IMR-90 (cell line): ENCODE measurements at regions of chr4 and their contacts with region 1.

Region 1: GRCh38 chr4:98658287-98659105 is at the start of gene TSPAN5:
- DNase-seq: peak; percentile 67
- ATAC-seq: peak; percentile 86
- H3K4me3 ChIP-seq: peak within 1 kb of the TSS; percentile 64
- H3K27ac ChIP-seq: peak within 1 kb of the TSS; percentile 94
- H3K4me1 ChIP-seq: peaks cover 23% of the 10 kb centered on the region
- H3K27me3 ChIP-seq: no peaks in the 10 kb centered on the region
- CTCF ChIP-seq: no peak; the same call in 1 of the 2 replicates
- POLR2A ChIP-seq: no peak; the same call in 1 of the 2 replicates
- RAD21 ChIP-seq: peak; percentile 13; the same call in 1 of the 2 replicates
- total RNA-seq, gene TSPAN5: 79.6 and 88.3 TPM in 2 replicates

Region 2: DNA sequence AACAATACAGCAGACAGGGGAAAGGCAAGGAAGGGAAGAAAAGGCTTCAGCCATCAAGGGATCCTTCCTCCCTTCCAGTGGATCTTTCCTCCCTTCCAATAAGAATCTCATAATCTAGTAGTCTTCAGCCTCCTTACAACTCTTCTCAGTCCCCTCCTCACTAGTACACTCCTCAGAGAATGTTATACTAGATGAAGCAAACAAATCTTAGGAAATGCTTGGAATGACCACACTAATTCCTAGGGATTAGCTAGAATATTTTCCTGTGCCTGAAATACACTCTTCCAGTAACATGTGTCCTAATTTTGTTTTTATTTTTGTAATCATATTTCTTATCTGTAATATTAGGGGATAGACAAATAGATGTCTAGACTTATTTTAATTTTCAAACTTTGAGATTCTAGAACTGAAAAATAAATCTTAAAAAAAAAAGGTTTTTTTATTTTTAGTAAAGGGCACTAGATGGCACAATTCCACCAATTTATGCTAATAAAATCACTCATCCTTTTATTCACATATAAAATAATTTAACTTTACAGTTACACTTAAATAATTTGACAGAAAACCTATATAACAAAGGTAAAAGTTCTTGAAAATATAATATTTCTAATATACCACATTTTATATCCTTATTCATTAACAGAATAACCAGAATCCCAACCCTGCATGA is 508.3 kb before region 1 on chr4:
- CTCF ChIA-PET with region 1: no interaction called
- POLR2A ChIA-PET with region 1: no interaction called
- dilution Hi-C with region 1: no loop called
- in situ Hi-C with region 1: loop called (anchors 25 kb)
- intact Hi-C with region 1: loop called (anchors 5 kb)
- DNase-seq: peak; percentile 16
- ATAC-seq: peak; percentile 59
- H3K4me3 ChIP-seq: no peak overlapping the region
- H3K27ac ChIP-seq: peak overlapping the region; percentile 29; the same call in 1 of the 2 replicates
- H3K4me1 ChIP-seq: peaks cover 2% of the 10 kb centered on the region; the same call in 1 of the 2 replicates
- H3K27me3 ChIP-seq: no peaks in the 10 kb centered on the region
- CTCF ChIP-seq: peak; percentile 45
- POLR2A ChIP-seq: no peak
- RAD21 ChIP-seq: peak; percentile 50

Region 3: GRCh38 chr4:98467627-98468072 is 190.8 kb before region 1 on chr4:
- CTCF ChIA-PET with region 1: interaction called, 8 read pairs
- POLR2A ChIA-PET with region 1: no interaction called
- dilution Hi-C with region 1: no loop called
- in situ Hi-C with region 1: loop called (anchors 5 kb)
- intact Hi-C with region 1: loop called (anchors 1 kb)
- DNase-seq: peak; percentile 95
- ATAC-seq: peak; percentile 88
- H3K4me3 ChIP-seq: peak overlapping the region; percentile 37; the same call in 1 of the 2 replicates
- H3K27ac ChIP-seq: 0 out of 2 replicates have a peak overlapping the region, but pooled peaks have one; percentile 4
- H3K4me1 ChIP-seq: peaks cover 5% of the 10 kb centered on the region
- H3K27me3 ChIP-seq: no peaks in the 10 kb centered on the region
- CTCF ChIP-seq: peak; percentile 82
- POLR2A ChIP-seq: peak; percentile 60; the same call in 1 of the 2 replicates
- RAD21 ChIP-seq: peak; percentile 90

Region 4: GRCh38 chr4:98546910-98547594 is 111.4 kb before region 1 on chr4:
- CTCF ChIA-PET with region 1: no interaction called
- POLR2A ChIA-PET with region 1: no interaction called
- dilution Hi-C with region 1: no loop called
- in situ Hi-C with region 1: no loop called
- intact Hi-C with region 1: loop called (anchors 5 kb)
- DNase-seq: peak; percentile 54
- ATAC-seq: peak; percentile 81
- H3K4me3 ChIP-seq: peak overlapping the region; percentile 26
- H3K27ac ChIP-seq: peak overlapping the region; percentile 56
- H3K4me1 ChIP-seq: no peaks in the 10 kb centered on the region; the same call in 1 of the 2 replicates
- H3K27me3 ChIP-seq: no peaks in the 10 kb centered on the region
- CTCF ChIP-seq: no peak
- POLR2A ChIP-seq: no peak
- RAD21 ChIP-seq: 0 out of 2 replicates have a peak, but pooled peaks have one; percentile 12

Region 5: GRCh38 chr4:98749206-98749605 is 90.7 kb after region 1 on chr4:
- CTCF ChIA-PET with region 1: no interaction called
- POLR2A ChIA-PET with region 1: no interaction called
- dilution Hi-C with region 1: no loop called
- in situ Hi-C with region 1: no loop called
- intact Hi-C with region 1: no loop called
- DNase-seq: no peak
- ATAC-seq: no peak
- H3K4me3 ChIP-seq: no peak overlapping the region
- H3K27ac ChIP-seq: no peak overlapping the region
- H3K4me1 ChIP-seq: peaks cover 4% of the 10 kb centered on the region; the same call in 1 of the 2 replicates
- H3K27me3 ChIP-seq: no peaks in the 10 kb centered on the region
- CTCF ChIP-seq: no peak
- POLR2A ChIP-seq: no peak
- RAD21 ChIP-seq: no peak

Region 6: GRCh38 chr4:98995183-98996055 is 336.9 kb after region 1 on chr4 and contains the start of gene METAP1:
- CTCF ChIA-PET with region 1: interaction called, 3 read pairs
- POLR2A ChIA-PET with region 1: no interaction called
- dilution Hi-C with region 1: no loop called
- in situ Hi-C with region 1: no loop called
- intact Hi-C with region 1: loop called (anchors 5 kb)
- DNase-seq: peak; percentile 92
- ATAC-seq: peak; percentile 95
- H3K4me3 ChIP-seq: peak within 1 kb of the TSS; percentile 98
- H3K27ac ChIP-seq: peak within 1 kb of the TSS; percentile 98
- H3K4me1 ChIP-seq: no peaks in the 10 kb centered on the region
- H3K27me3 ChIP-seq: no peaks in the 10 kb centered on the region
- CTCF ChIP-seq: peak; percentile 73
- POLR2A ChIP-seq: peak; percentile 55; the same call in 1 of the 2 replicates
- RAD21 ChIP-seq: peak; percentile 67
- total RNA-seq, gene METAP1: 43.7 and 76.1 TPM in 2 replicates

Region 7: GRCh38 chr4:99088481-99089365 is 430.2 kb after region 1 on chr4 and contains the start of gene ADH5:
- CTCF ChIA-PET with region 1: no interaction called
- POLR2A ChIA-PET with region 1: no interaction called
- dilution Hi-C with region 1: no loop called
- in situ Hi-C with region 1: no loop called
- intact Hi-C with region 1: loop called (anchors 10 kb)
- DNase-seq: peak; percentile 81
- ATAC-seq: peak; percentile 93
- H3K4me3 ChIP-seq: peak within 1 kb of the TSS; percentile 83
- H3K27ac ChIP-seq: peak within 1 kb of the TSS; percentile 97
- H3K4me1 ChIP-seq: peaks cover 2% of the 10 kb centered on the region; the same call in 1 of the 2 replicates
- H3K27me3 ChIP-seq: no peaks in the 10 kb centered on the region
- CTCF ChIP-seq: no peak
- POLR2A ChIP-seq: peak; percentile 86
- RAD21 ChIP-seq: no peak
- total RNA-seq, gene ADH5: 178 and 246 TPM in 2 replicates